Breast epithelium (tissue), 4 donors: ENCODE measurements at regions of chr13 and their contacts with region 1.

Region 1: DNA sequence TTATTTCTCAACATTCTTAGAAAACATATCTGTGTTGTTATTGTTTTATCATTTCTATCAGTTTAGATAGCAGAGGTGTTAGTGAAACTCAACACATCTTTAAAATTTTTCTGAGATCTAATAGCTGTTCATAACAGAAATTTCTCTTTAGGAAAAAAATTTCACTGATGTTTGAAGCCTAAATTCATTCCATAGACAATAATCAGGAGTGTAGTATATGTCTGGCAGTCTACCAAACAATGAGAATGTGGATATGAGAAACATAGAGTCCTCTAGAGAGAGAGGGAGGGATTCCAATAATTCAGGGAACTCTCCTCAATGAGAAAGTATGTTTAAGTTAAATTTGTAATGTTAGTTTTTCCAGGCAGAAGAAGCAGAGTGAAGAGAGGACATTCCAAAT is 118.2 kb upstream of the EDNRB start:
- DNase-seq: no peak
- H3K4me3 ChIP-seq: no peak overlapping the region
- H3K27ac ChIP-seq: no peak overlapping the region
- H3K4me1 ChIP-seq: no peaks in the 10 kb centered on the region
- H3K27me3 ChIP-seq: no peaks in the 10 kb centered on the region
- CTCF ChIP-seq: no peak
- POLR2A ChIP-seq: no peak

Region 2: GRCh38 chr13:77913003-77913402 is 123.8 kb before region 1 on chr13:
- intact Hi-C with region 1: loop called (anchors 5 kb)
- DNase-seq: no peak
- H3K4me3 ChIP-seq: peak overlapping the region in 1 of 3 donors; percentile 72
- H3K27ac ChIP-seq: peak overlapping the region in 1 of 2 donors; percentile 40
- H3K4me1 ChIP-seq: no peaks in the 10 kb centered on the region
- H3K27me3 ChIP-seq: peaks cover 0 to 3% of the 10 kb centered on the region in 2 donors
- CTCF ChIP-seq: no peak
- POLR2A ChIP-seq: no peak

Region 3: GRCh38 chr13:78065141-78065540 is 28.3 kb after region 1 on chr13:
- intact Hi-C with region 1: loop called (anchors 2 kb)
- DNase-seq: no peak
- H3K4me3 ChIP-seq: no peak overlapping the region
- H3K27ac ChIP-seq: no peak overlapping the region
- H3K4me1 ChIP-seq: no peaks in the 10 kb centered on the region
- H3K27me3 ChIP-seq: no peaks in the 10 kb centered on the region
- CTCF ChIP-seq: no peak
- POLR2A ChIP-seq: no peak